PC-9 (cell line): ENCODE measurements at regions of chr13 and their contacts with region 1.

Region 1: GRCh38 chr13:43240278-43240677 is 216.9 kb downstream of the DNAJC15 start:
- DNase-seq: no peak
- H3K4me3 ChIP-seq: no peak overlapping the region
- H3K27ac ChIP-seq: no peak overlapping the region
- H3K4me1 ChIP-seq: peaks cover 6% of the 10 kb centered on the region; the same call in 1 of the 2 replicates
- H3K27me3 ChIP-seq: no peaks in the 10 kb centered on the region
- CTCF ChIP-seq: no peak

Region 2: GRCh38 chr13:43270130-43270830 is 30.0 kb after region 1 on chr13:
- CTCF ChIA-PET with region 1: no interaction called
- POLR2A ChIA-PET with region 1: interaction called, 10 read pairs
- intact Hi-C with region 1: no loop called
- DNase-seq: peak in 1 of 2 experiments; percentile 38
- H3K4me3 ChIP-seq: no peak overlapping the region
- H3K27ac ChIP-seq: peak overlapping the region; percentile 90
- H3K4me1 ChIP-seq: peaks cover 36% of the 10 kb centered on the region
- H3K27me3 ChIP-seq: no peaks in the 10 kb centered on the region
- CTCF ChIP-seq: no peak